ENCODE measurements at regions of chr15 and their contacts with region 1.

Region 1: DNA sequence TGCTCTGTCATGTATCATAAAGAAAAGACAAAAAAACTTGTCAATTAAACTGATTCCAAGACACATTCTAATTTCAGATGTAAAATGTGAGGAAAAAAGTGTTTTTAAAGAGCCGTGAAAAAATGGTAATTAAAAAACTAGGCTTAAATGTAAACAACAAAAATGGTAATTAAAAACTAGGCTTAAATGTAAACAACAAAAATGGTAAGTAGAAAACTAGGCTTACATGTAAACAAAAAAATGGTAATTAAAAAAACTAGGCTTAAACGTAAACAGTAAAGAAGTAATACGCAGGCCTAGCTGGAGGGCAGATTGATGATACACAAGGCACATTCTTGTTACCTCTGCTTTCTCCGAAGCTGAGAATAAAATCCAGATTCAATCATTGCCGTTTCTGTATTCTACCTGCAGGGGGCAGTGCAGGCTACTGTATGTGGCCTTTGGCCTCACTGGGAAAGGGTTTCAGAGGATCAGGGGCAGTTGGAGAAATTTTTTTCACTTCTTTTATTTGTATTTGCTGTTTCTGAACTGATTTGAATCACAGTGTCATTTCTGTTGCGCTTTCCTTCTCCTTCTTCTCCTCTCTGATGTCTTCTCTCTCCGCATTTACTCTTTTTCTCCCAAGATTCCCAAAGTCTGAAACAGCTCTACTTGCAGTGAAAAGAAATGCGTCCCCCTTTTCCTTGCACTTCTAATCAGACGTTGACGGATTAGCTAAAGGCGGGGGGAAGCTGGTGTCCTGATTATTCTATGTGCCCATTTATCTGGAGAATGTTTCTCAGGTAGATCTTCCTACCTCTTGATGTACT is 67.2 kb upstream of the MCTP2 start:
- DNase-seq: peak in 1 of 2 donors; percentile 62
- ATAC-seq: peak; percentile 78

Region 2: GRCh38 chr15:94324117-94324826 is 160.1 kb after region 1 on chr15:
- intact Hi-C with region 1: loop called (anchors 2 to 5 kb)
- DNase-seq: peak; percentile 34 to 39
- ATAC-seq: peak; percentile 80